HEK293 (cell line): ENCODE measurements at regions of chr6 and their contacts with region 1.

Region 1: DNA sequence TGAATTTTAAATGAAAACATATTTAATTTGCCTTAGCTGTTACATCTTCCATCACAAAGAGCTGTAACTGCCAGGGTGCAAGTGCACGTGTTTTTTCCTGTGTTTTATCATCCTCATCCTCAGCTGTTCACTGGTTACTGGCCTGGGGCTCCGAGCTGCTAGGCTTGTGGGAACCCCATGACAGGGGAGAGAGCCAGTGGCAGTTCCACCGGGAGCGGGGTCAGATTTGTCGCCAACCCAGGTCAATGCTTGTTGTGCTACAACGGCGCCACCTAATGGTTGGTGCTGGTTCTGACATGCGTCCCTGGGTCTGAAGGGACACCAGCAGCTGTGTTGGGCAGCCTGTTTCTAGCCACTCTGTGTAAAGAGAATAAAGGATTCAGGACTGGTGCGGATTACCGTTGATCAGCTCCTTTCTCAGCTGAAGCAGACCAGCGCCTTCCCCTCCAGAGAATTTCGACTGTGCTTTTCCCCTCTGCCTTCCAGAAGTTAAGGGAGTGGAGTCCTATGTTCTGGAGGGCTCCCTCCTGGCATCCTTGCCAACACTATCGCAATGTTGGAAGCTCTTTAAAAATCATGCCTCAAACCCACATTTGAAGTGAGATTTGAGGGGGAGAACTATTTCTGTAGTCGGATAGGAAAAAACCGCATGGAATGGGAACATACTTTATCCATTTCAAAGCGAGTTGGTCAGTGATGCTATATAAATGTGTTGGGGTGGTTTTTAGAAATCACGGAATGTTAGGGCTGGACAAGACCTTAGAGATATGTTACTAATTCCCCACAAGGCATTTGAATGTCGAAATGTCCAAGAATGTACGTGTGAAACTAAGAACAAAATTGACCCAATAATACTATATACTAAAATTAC is 32.1 kb downstream of the SUMO4 start:
- H3K4me3 ChIP-seq: no peak overlapping the region
- H3K27ac ChIP-seq: no peak overlapping the region
- H3K4me1 ChIP-seq: no peaks in the 10 kb centered on the region
- CTCF ChIP-seq: peak; percentile 89

Region 2: DNA sequence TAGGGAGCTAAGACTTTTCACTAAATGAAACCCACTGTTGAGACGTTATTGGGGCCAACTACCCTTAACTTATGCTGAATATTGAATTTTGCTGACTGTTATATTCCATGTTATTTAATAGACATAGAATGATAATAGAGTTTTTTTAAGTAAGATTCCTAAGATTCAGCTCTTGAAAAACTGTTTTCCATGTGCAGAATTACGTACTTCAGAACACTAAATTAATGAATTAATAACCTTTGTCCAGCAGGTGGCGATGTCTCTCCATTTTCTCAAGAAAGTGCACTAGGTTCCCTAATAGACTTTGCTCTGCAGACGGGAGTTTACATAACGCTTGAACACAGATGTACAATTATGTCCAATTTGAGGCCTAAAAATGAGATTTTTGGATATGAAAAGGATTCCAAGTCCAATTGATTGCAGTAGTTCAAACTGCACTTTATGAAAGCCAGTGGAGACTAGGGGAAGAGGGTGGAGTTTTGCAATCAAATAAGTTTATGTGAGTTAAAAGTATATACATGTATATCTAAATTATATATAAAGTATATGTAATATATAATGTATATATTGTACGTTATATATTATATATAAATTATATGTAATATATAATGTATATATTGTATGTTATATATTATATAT is 403.3 kb before region 1 on chr6:
- CTCF ChIA-PET with region 1: interaction called, 193 read pairs
- POLR2A ChIA-PET with region 1: interaction called, 3 read pairs
- H3K4me3 ChIP-seq: no peak overlapping the region
- H3K27ac ChIP-seq: no peak overlapping the region
- H3K4me1 ChIP-seq: peaks cover 14% of the 10 kb centered on the region
- CTCF ChIP-seq: peak; percentile 19; the same call in 1 of the 2 replicates

Region 3: GRCh38 chr6:149075616-149076364 is 356.4 kb before region 1 on chr6:
- CTCF ChIA-PET with region 1: interaction called, 34 read pairs
- POLR2A ChIA-PET with region 1: no interaction called
- H3K4me3 ChIP-seq: no peak overlapping the region
- H3K27ac ChIP-seq: peak overlapping the region; percentile 28
- H3K4me1 ChIP-seq: peaks cover 32% of the 10 kb centered on the region
- CTCF ChIP-seq: no peak

Region 4: DNA sequence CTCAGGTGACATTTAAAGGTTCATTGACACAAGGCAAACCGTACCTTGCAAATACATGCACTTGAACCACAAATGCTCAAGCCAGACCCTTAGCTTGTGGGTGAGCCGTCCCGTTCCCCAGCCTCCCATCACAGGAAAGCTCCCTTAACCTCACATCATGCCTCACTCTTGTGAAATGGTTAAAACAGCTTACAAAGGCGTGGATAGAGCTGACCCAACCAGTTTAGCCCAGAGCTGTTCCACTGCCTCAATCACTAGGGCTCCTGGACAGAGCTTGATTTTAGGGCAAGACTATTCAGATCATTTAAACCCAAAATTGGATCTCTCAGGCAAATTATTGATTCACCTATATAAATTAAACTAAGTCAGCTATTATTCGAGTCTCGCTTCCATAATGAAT is 344.2 kb before region 1 on chr6:
- CTCF ChIA-PET with region 1: interaction called, 80 read pairs
- POLR2A ChIA-PET with region 1: no interaction called
- H3K4me3 ChIP-seq: no peak overlapping the region
- H3K27ac ChIP-seq: no peak overlapping the region
- H3K4me1 ChIP-seq: no peaks in the 10 kb centered on the region
- CTCF ChIP-seq: no peak

Region 5: GRCh38 chr6:149190224-149190831 is 241.8 kb before region 1 on chr6:
- CTCF ChIA-PET with region 1: interaction called, 15 read pairs
- POLR2A ChIA-PET with region 1: no interaction called
- H3K4me3 ChIP-seq: no peak overlapping the region
- H3K27ac ChIP-seq: no peak overlapping the region
- H3K4me1 ChIP-seq: no peaks in the 10 kb centered on the region
- CTCF ChIP-seq: 0 out of 2 replicates have a peak, but pooled peaks have one; percentile 19

Region 6: GRCh38 chr6:149453597-149454380 is 21.6 kb after region 1 on chr6:
- CTCF ChIA-PET with region 1: interaction called, 10 read pairs
- POLR2A ChIA-PET with region 1: no interaction called
- H3K4me3 ChIP-seq: no peak overlapping the region
- H3K27ac ChIP-seq: no peak overlapping the region
- H3K4me1 ChIP-seq: no peaks in the 10 kb centered on the region
- CTCF ChIP-seq: no peak